Posterior cingulate gyrus (tissue), 11 donors: ENCODE measurements at regions of chr1 and their contacts with region 1.

Region 1: GRCh38 chr1:151739590-151740375 is 18.5 kb downstream of the RIIAD1 start:
- DNase-seq: no peak

Region 2: DNA sequence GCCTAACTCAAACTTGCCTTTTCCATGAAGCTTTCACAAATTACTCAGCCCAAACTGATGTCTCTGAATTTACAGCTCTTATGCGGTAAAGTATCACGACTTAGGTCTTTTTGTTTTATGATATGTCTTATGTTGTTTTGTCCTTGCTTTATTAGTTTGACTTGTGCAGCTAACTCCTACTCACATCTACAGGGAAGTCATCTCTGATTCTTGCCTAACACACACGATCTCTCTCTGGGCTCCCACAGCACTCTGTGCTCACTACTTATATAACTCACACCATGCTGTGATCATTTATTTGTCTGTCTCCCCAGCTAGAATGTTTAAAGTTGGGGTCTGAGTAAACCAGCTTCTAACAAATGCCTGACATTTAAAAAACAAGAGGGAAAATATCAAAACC is 403.2 kb before region 1 on chr1:
- intact Hi-C with region 1: no loop called
- DNase-seq: no peak

Region 3: GRCh38 chr1:151443846-151444782 is 295.7 kb before region 1 on chr1:
- intact Hi-C with region 1: loop called (anchors 5 kb)
- DNase-seq: peak in 3 of 10 donors; percentile 34 to 51 (median 39)

Region 4: DNA sequence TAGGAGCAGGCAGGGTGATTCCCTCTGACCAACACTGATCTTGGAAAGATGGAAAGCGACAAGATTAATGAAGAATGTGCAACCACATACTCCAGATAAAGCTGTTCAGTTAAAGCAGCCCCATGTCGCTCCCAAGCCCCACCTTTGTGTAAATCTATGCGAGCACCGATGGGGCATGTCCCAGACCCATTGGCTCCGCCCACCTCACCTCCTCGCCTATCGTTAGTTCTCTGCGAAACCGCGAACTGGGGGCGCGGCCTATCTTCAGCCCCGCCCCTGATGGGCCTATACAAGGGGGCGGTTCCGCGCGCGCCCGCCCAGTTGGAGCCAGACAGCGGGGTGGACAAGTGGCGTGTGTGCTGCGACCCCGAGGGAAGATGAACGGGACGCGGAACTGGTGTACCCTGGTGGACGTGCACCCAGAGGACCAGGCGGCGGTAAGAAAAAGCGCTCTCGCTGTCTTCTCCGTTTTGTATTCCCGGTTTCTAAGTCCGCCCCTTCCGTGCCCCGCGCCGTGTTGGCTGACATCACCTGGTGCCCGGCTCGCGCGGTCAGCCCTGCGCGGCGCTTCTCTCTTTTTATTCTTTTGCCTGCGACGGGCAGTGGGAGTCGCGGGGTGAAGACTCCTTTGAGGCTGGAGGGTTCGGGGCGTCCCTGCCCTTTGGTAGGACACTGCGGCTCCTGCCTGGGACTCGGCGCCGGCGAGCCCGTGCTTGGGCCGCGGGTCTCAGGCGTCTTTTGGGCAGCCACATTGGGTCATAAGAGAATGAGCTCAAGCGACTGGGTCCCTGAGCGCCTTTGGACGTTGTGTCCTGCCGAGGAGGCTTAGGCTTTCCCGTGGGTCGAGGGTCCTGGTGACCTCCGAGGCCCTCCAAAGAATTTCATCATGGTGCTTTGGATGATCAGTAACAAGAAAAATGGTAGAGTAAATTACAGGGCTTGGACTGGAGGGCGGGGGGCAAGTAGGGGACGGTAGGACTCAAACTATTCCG is 199.5 kb before region 1 on chr1 and contains the start of gene TUFT1:
- intact Hi-C with region 1: loop called (anchors 5 kb)
- DNase-seq: peak; percentile 79 to 99 (median 91)

Region 5: DNA sequence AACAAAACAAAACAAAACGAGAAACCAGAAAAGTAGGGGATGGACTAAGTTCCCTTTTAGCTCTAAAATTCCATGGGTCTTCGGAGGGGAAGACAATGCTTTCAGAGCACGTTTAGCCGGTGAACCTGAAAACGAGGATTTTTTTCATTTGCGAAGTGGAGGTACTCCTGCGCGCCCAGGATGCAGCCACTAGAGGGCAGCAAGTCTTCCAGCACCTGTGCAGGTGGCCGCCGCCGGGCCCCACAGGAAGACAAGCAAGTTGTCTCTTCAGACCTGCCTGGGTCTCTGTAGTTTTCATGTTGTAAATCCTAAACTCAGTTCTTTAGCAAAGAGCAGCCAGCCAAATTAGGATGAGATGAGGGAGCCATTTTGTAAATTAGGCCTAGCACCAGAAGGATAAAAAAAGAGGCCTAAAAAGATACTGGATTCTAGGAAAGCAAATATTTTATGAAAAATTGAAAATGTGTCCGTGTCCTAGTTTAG is 145.6 kb before region 1 on chr1:
- intact Hi-C with region 1: loop called (anchors 5 kb)
- DNase-seq: peak; percentile 60 to 97 (median 78)

Region 6: GRCh38 chr1:151635479-151636072 is 104.2 kb before region 1 on chr1:
- intact Hi-C with region 1: no loop called
- DNase-seq: no peak

Region 7: DNA sequence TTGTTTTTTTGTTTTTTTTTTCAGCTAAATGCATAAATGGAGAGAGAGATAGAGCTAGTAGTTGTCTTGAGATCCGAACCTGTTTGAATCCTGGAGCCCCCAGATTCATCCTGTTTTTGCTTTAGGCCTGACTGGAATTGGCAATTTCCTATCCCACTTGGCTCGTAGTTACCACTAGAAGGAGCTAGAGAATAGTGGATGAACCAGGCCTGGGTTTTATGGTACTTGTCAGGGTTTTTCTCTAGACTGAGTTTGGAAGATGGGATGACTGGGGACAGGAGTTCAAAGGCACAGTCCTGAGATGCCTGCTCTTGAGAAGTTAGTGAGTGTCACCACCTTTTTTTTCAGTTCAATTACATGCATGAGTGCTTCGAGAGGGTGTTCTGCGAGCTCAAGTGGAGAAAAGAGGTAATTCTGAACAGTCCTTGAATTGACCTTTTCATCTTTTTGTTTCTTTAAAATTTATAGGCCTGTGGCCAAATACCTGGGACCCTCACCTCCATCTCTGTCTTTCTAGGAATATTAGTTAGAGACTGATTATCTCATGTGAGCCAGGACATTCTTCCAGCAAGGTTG is 46.6 kb before region 1 on chr1:
- intact Hi-C with region 1: loop called (anchors 1 kb)
- DNase-seq: no peak

Region 8: DNA sequence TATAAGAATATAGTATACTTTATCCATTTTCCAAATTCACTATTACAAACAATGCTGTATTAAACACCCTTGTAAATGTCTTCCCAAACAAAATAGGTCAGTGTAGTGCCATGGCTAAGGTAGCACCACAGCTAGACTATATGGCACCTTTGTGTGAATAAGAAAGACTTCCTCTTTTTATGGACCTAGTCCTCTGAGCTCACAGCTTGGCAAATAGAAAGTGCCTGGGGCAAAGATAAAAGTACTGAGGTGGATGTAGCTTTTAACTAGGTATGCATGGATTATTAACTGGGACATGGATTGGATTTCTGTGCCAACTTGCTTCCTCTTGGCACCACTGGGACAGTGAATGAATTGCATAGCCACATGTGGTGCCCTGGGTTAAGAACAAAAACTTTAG is 459.2 kb after region 1 on chr1:
- intact Hi-C with region 1: no loop called
- DNase-seq: no peak